ENCODE measurements at regions of chr1 and their contacts with region 1.

Region 1: DNA sequence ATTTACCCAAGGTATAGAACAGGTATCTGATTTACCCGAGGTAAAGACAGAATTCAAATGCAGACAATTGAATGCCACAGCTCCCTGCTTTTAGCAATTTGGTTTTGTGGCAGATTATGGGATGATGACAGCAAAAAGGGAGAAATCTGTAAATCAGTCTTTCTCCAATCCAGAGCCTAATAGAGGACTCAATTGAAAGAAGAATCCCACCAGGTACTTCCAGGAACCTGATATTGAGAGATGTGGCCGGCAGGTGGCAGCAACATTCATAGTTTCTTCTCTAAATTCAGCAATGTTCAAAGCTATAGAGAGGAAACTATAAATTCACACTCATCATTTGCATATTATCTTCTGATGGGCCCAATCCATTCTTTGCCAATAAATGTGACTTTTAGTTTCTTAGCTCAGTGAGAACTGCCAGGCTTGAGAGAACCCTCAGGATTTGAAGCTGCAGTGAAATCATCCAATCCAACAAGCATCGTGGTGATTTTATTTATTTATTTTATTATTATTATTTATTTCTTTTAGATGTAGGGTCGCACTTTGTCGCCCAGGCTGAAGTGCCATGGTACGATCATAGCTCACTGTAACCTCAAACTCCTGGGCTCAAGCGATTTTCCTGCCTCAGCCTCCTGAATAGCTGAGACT is 9.8 kb upstream of the PHACTR4 start:
- DNase-seq: peak; percentile 63
- H3K27ac ChIP-seq: no peak overlapping the region
- CTCF ChIP-seq: peak; percentile 76

Region 2: DNA sequence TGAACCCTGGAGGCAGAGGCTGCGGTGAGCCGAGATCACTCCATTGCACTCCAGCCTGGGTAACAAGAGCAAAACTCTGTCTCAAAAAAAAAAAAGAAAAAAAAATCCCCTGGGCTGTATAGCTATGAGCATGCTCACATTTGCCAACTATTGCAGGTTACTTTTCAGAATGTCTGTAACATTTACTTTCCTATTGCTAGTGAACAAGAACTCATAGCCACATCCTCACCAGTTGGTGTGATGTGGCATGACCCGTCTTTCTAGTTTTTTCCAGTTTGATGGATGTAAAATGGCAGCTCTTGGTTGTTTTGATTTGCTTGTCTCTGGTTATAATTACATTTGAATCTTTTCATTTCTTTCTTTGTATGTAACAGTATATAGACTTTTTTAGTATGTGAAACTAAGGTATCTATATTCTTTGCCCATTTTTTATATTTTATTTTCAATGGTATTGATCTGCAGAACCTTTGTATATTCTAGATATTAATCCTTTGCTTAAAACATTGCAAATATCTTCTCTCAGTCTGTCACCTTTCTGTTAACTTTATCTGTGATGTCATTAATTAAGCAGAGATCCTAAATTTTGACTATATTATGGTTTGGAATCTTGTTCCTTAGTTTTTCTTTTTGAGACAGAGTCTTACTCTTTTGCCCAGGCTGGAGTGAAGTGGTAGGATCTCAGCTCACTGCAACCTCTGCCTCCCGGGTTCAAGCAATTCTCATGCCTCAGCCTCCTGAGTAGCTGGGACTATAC is 19.3 kb before region 1 on chr1:
- CTCF ChIA-PET with region 1: no interaction called
- POLR2A ChIA-PET with region 1: no interaction called
- DNase-seq: no peak
- H3K27ac ChIP-seq: no peak overlapping the region
- CTCF ChIP-seq: no peak

Region 3: GRCh38 chr1:28602536-28603439 is 243.1 kb after region 1 on chr1:
- CTCF ChIA-PET with region 1: interaction called, 10 read pairs
- POLR2A ChIA-PET with region 1: no interaction called
- DNase-seq: peak; percentile 72
- H3K27ac ChIP-seq: peak overlapping the region; percentile 62
- CTCF ChIP-seq: peak; percentile 73